Common myeloid progenitor, CD34-positive (primary cell): ENCODE measurements at regions of chr5 and their contacts with region 1.

Region 1: GRCh38 chr5:134837530-134838181 is 8.1 kb upstream of the C5orf24 start:
- DNase-seq: no peak
- H3K4me3 ChIP-seq: no peak overlapping the region
- H3K27ac ChIP-seq: no peak overlapping the region
- H3K4me1 ChIP-seq: no peaks in the 10 kb centered on the region
- H3K27me3 ChIP-seq: no peaks in the 10 kb centered on the region

Region 2: GRCh38 chr5:134477462-134478250 is 360.0 kb before region 1 on chr5:
- CTCF ChIA-PET with region 1: no interaction called
- POLR2A ChIA-PET with region 1: interaction called, 12 read pairs
- DNase-seq: peak in 2 of 3 donors; percentile 19 to 41
- H3K4me3 ChIP-seq: no peak overlapping the region
- H3K27ac ChIP-seq: no peak overlapping the region
- H3K4me1 ChIP-seq: no peaks in the 10 kb centered on the region
- H3K27me3 ChIP-seq: no peaks in the 10 kb centered on the region